ENCODE measurements at regions of chr16 and their contacts with region 1.

Region 1: GRCh38 chr16:4116337-4117249 is at the start of gene ADCY9:
- DNase-seq: peak; percentile 50
- ATAC-seq: peak; percentile 55
- H3K4me3 ChIP-seq: peak within 1 kb of the TSS; percentile 79 to 91 (median 85)
- H3K27ac ChIP-seq: peak within 1 kb of the TSS; percentile 91
- H3K4me1 ChIP-seq: peaks cover 28% of the 10 kb centered on the region
- H3K27me3 ChIP-seq: no peaks in the 10 kb centered on the region; a peak in 1 of 5 replicates
- CTCF ChIP-seq: peak; percentile 7; the same call in 1 of the 2 replicates
- EP300 ChIP-seq: no peak
- POLR2A ChIP-seq: peak; percentile 62 to 71
- RAD21 ChIP-seq: peak; percentile 58
- total RNA-seq, gene ADCY9: 9.6 and 11.2 TPM in 2 replicates

Region 2: DNA sequence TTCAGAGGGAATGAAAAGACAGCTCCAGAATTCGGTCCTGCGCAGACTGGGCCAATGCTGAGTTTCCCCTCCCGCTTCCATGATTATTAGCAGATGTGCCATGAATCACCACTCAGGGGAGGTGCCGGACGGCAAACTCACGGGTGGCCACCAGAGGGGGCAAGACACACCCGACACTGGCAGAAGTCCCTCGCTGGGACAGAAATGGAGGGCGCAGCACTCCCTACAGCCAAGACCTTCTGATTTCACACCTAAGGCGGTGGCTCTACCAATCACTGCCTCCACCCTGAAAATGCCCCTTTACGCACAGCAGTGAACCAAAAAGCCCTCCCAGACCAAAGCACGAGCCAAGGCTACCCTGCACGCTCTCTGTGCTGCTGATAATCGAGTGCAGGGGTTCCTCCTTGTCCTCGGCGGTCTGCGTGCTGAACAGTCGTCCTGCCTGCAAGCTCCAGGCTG is 426.1 kb before region 1 on chr16:
- CTCF ChIA-PET with region 1: no interaction called
- POLR2A ChIA-PET with region 1: no interaction called
- in situ Hi-C with region 1: no loop called
- intact Hi-C with region 1: loop called (anchors 10 kb)
- DNase-seq: peak; percentile 66
- ATAC-seq: peak; percentile 94
- H3K4me3 ChIP-seq: no peak overlapping the region
- H3K27ac ChIP-seq: no peak overlapping the region
- H3K4me1 ChIP-seq: peaks cover 33% of the 10 kb centered on the region
- H3K27me3 ChIP-seq: no peaks in the 10 kb centered on the region
- CTCF ChIP-seq: peak; percentile 93
- EP300 ChIP-seq: no peak
- POLR2A ChIP-seq: no peak
- RAD21 ChIP-seq: peak; percentile 90

Region 3: DNA sequence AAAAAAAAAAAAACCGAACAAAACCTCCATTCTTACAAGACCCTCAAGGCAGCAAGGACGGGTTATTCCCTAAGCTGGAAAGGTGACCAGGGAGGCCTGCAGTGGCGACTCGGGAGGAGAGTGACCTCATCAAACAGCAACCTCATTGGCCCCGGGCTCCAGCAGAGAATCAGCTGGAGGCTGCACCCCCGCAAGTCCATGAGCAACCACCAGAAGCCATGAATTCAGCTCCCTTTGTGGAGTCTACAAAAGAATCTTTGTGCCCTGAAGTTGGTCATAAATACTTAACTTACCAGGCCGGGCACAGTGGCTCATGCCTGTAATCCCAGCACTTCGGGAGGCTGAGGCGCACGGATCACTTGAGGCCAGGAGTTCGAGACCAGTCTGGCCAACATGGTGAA is 155.1 kb before region 1 on chr16:
- CTCF ChIA-PET with region 1: no interaction called
- POLR2A ChIA-PET with region 1: no interaction called
- in situ Hi-C with region 1: no loop called
- intact Hi-C with region 1: loop called (anchors 10 kb)
- DNase-seq: peak; percentile 65
- ATAC-seq: peak; percentile 84
- H3K4me3 ChIP-seq: peak overlapping the region; percentile 56 to 91 (median 73)
- H3K27ac ChIP-seq: no peak overlapping the region
- H3K4me1 ChIP-seq: no peaks in the 10 kb centered on the region
- H3K27me3 ChIP-seq: peaks cover 0 to 13% of the 10 kb centered on the region in 2 experiments; a peak in 3 of 5 replicates
- CTCF ChIP-seq: no peak
- EP300 ChIP-seq: no peak
- POLR2A ChIP-seq: no peak
- RAD21 ChIP-seq: no peak

Region 4: DNA sequence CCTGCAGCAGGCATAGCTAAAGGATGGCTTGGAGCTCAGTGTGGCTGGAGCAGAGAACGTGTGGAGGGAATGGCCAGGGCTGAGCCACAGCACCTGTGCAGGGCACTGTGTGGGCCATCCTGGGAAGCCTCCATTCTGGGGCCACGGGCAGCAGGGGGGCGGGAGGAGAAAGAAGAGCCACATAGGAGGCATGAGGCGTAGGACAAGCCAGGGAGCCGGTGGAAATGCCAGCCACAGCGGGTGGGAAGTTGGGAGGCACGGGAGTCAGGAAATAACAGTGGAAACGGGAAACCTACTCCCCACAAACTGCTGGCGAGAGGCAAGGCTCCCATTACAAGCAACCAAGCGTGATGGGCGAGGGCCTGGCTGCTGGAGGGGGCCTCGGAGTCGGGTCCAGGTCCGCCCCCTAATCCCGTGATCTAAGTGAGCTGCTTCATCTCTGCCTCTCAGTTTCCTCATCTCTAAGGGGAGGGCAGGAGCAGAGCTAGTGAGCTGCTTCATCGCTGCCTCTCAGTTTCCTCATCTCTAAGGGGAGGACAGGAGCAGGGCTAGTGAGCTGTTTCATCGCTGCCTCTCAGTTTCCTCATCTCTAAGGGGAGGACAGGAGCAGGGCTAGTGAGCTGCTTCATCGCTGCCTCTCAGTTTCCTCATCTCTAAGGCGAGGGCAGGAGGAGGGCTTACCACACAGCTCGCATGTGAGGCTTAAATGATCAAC is 105.2 kb before region 1 on chr16:
- CTCF ChIA-PET with region 1: no interaction called
- POLR2A ChIA-PET with region 1: interaction called, 10 read pairs
- in situ Hi-C with region 1: loop called (anchors 5 kb)
- intact Hi-C with region 1: loop called (anchors 2 kb)
- DNase-seq: no peak
- ATAC-seq: peak; percentile 28
- H3K4me3 ChIP-seq: peak overlapping the region in 2 of 3 experiments; percentile 35 to 58; a peak in 3 of 6 replicates
- H3K27ac ChIP-seq: peak overlapping the region; percentile 84
- H3K4me1 ChIP-seq: peaks cover 59% of the 10 kb centered on the region
- H3K27me3 ChIP-seq: no peaks in the 10 kb centered on the region
- CTCF ChIP-seq: no peak
- EP300 ChIP-seq: no peak
- POLR2A ChIP-seq: no peak
- RAD21 ChIP-seq: no peak

Region 5: GRCh38 chr16:4019371-4019791 is 97.2 kb before region 1 on chr16:
- CTCF ChIA-PET with region 1: no interaction called
- POLR2A ChIA-PET with region 1: interaction called, 4 read pairs
- in situ Hi-C with region 1: loop called (anchors 5 kb)
- intact Hi-C with region 1: loop called (anchors 2 kb)
- DNase-seq: no peak
- ATAC-seq: no peak
- H3K4me3 ChIP-seq: peak overlapping the region in 1 of 3 experiments; percentile 30; a peak in 1 of 6 replicates
- H3K27ac ChIP-seq: peak overlapping the region; percentile 41
- H3K4me1 ChIP-seq: peaks cover 64% of the 10 kb centered on the region
- H3K27me3 ChIP-seq: no peaks in the 10 kb centered on the region
- CTCF ChIP-seq: no peak
- EP300 ChIP-seq: no peak
- POLR2A ChIP-seq: no peak
- RAD21 ChIP-seq: no peak

Region 6: DNA sequence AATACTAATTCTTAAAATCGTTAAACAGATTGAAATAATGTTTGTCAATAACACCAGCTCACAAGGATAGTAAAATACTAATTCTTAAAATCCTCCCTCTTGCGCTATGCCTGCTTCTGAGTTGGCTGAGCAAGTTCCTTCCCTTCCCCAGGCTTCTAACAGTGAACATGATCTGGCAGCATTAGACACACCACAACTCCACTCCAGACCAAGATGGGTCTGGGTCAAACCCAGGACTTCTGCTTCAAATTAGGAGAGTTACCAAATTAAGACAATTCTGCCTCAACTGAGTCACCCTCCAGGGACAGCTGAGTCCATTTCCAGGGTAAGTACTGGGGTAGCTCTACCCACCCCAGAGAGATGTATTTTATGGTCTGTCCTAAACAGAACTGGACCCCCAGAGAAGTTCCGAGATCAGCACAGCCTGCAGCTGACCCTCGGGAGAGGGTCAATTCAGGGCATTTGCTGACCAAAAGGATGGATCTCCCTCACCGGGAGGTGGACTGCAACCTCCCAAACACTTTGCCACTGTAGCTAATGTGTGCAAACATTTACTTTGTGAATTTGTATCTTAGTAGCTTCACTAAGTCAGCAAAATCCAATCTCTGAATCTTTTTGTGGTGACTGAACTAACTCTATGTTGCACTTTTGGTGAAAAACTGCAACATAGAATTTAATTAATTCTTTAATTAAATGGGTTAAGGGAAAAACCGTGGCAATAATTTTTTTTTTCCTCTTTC is 49.2 kb before region 1 on chr16:
- CTCF ChIA-PET with region 1: no interaction called
- POLR2A ChIA-PET with region 1: no interaction called
- in situ Hi-C with region 1: no loop called
- intact Hi-C with region 1: loop called (anchors 2 kb)
- DNase-seq: peak; percentile 15
- ATAC-seq: peak; percentile 74
- H3K4me3 ChIP-seq: no peak overlapping the region
- H3K27ac ChIP-seq: no peak overlapping the region
- H3K4me1 ChIP-seq: peaks cover 42% of the 10 kb centered on the region
- H3K27me3 ChIP-seq: no peaks in the 10 kb centered on the region
- CTCF ChIP-seq: no peak
- EP300 ChIP-seq: no peak
- POLR2A ChIP-seq: no peak
- RAD21 ChIP-seq: no peak

Region 7: GRCh38 chr16:4253394-4254150 is 137.0 kb after region 1 on chr16:
- CTCF ChIA-PET with region 1: no interaction called
- POLR2A ChIA-PET with region 1: interaction called, 6 read pairs
- in situ Hi-C with region 1: loop called (anchors 5 kb)
- intact Hi-C with region 1: loop called (anchors 5 kb)
- DNase-seq: peak; percentile 97
- ATAC-seq: peak; percentile 96
- H3K4me3 ChIP-seq: peak overlapping the region; percentile 48 to 77 (median 74); a peak in 5 of 6 replicates
- H3K27ac ChIP-seq: peak overlapping the region; percentile 69
- H3K4me1 ChIP-seq: 0 out of 2 replicates have a peak, but pooled peaks cover 6% of the 10 kb centered on the region
- H3K27me3 ChIP-seq: no peaks in the 10 kb centered on the region
- CTCF ChIP-seq: no peak; the same call in 1 of the 2 replicates
- EP300 ChIP-seq: no peak
- POLR2A ChIP-seq: peak; percentile 87
- RAD21 ChIP-seq: no peak; the same call in 1 of the 2 replicates

Measured in HepG2 (cell line).